ENCODE measurements at regions of chr10 and their contacts with region 1.

Region 1: DNA sequence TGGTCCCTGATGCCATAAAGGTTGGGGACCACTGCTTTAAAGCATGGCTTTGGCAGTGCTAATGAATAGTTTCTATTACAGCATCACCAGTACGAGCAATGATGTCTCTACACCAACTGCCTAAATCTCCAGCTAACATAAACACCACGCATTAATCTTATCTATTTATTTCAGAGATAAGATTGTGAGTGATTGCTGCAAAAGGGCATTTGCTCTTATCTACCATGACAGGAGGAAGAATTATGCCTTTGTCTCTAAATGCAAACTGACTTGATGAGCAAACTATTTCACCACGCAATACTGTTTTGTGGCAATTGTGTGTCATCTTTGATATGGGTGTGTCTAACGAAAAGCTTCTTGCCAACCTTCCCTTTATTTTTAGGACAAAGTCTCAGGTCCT is 684.9 kb downstream of the SORCS1 start:
- DNase-seq: no peak
- ATAC-seq: no peak
- H3K4me3 ChIP-seq: no peak overlapping the region
- H3K4me3 Mint-ChIP-seq: no peak overlapping the region
- H3K27ac ChIP-seq: no peak overlapping the region
- H3K27ac Mint-ChIP-seq: no peak overlapping the region
- H3K4me1 ChIP-seq: no peaks in the 10 kb centered on the region
- H3K4me1 Mint-ChIP-seq: no peaks in the 10 kb centered on the region
- H3K27me3 ChIP-seq: no peaks in the 10 kb centered on the region
- H3K27me3 Mint-ChIP-seq: no peaks in the 10 kb centered on the region
- CTCF ChIP-seq: no peak

Region 2: DNA sequence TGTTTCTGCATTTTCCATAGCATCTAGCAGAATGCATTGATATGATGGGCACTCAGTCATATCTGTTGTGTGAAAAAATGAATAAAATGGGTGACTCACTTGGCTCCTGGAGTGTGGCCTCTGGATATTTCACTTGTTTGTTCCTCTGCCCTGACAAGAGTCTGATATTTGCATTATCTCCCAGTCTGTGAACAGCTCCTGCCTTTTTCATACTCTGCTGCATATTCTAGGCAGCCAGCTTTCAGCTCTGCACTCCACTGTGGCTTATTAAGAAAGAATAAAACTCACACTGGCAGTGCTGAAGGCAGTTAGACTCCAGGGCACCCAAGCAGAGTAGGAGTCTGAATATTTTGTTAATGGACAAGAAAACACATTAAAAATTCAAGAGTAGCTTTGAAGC is 61.0 kb after region 1 on chr10:
- CTCF ChIA-PET with region 1: no interaction called
- POLR2A ChIA-PET with region 1: no interaction called
- intact Hi-C with region 1: loop called in 1 of 2 experiments (anchors 10 kb)
- DNase-seq: no peak
- ATAC-seq: no peak
- H3K4me3 ChIP-seq: no peak overlapping the region
- H3K4me3 Mint-ChIP-seq: no peak overlapping the region
- H3K27ac ChIP-seq: no peak overlapping the region
- H3K27ac Mint-ChIP-seq: no peak overlapping the region
- H3K4me1 ChIP-seq: no peaks in the 10 kb centered on the region
- H3K4me1 Mint-ChIP-seq: no peaks in the 10 kb centered on the region
- H3K27me3 ChIP-seq: no peaks in the 10 kb centered on the region
- H3K27me3 Mint-ChIP-seq: no peaks in the 10 kb centered on the region
- CTCF ChIP-seq: no peak

Measured in CD8-positive, alpha-beta T cell (primary cell).